Endothelial cell of umbilical vein (primary cell): ENCODE measurements at regions of chr21 and their contacts with region 1.

Region 1: DNA sequence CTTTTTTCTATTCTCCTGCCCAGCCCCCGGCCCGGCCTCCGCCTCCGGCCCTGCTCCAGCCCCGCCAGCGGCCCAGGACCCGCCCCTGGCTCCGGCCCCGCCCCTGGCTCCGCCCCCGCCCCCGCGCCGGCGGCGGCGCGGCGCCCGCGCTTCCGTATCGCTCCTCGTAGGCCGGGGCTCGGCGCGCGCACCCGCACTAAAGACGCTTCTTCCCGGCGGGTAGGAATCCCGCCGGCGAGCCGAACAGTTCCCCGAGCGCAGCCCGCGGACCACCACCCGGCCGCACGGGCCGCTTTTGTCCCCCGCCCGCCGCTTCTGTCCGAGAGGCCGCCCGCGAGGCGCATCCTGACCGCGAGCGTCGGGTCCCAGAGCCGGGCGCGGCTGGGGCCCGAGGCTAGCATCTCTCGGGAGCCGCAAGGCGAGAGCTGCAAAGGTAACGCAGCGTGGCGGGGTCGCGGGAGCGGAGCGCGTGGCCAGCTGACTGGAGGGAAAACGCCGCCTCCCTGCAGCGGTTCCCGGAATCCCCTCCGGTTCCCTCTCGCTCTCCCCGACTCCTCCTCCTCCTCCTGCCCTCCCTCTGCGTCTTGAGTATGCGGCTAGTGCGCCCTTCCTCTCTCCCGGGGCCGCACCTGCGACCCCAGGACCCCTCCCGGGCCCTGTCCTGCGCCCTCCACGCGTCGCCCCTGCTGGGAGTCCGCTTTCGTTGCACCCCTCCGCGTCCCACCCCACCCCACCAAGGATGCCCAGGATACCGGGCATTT is at the start of gene IFNAR2:
- DNase-seq: peak; percentile 62
- H3K4me3 ChIP-seq: peak within 1 kb of the TSS; percentile 90 to 98 (median 96)
- H3K27ac ChIP-seq: peak within 1 kb of the TSS; percentile 88
- H3K4me1 ChIP-seq: peaks cover 40% of the 10 kb centered on the region
- H3K27me3 ChIP-seq: peaks cover 6 to 10% of the 10 kb centered on the region in 2 experiments
- CTCF ChIP-seq: no peak
- POLR2A ChIP-seq: peak; percentile 15
- total RNA-seq, gene IFNAR2: 37.0 and 42.1 TPM in 2 replicates

Region 2: GRCh38 chr21:33189237-33189636 is 40.7 kb before region 1 on chr21:
- CTCF ChIA-PET with region 1: no interaction called
- POLR2A ChIA-PET with region 1: no interaction called
- dilution Hi-C with region 1: no loop called
- intact Hi-C with region 1: no loop called
- DNase-seq: no peak
- H3K4me3 ChIP-seq: no peak overlapping the region
- H3K27ac ChIP-seq: no peak overlapping the region
- H3K4me1 ChIP-seq: no peaks in the 10 kb centered on the region
- H3K27me3 ChIP-seq: peaks cover 7 to 30% of the 10 kb centered on the region in 2 experiments
- CTCF ChIP-seq: no peak
- POLR2A ChIP-seq: no peak

Region 3: DNA sequence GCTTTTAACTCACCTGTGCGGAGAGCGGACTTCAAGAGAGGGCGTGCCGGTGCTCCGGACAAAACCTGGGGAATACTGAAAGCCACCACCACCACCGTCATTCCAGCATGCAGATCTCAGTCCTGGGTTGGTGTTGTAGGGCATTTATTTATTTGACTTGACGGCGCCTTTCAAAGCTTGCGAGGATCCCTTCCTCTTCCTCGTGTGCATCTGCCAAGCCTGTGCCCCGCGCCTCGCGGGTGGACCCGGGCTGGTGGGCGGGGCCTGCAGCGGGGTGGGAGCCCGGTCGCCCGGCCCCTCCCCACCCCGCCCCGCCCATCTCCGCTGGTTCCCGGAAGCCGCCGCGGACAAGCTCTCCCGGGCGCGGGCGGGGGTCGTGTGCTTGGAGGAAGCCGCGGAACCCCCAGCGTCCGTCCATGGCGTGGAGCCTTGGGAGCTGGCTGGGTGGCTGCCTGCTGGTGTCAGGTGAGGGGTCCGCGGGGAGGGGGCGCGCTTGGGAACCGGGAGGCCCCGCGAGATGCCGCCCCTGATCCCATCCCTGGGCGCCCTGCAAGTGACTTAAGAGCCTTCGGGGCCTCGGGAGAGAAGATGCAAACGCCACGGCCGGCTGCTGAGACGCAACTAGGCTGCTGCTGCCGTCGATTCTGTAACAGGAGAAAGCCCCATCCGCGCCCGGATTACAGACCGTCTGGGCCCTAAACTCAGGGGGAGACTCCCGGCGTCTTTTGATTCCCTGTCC is 36.3 kb after region 1 on chr21 and contains the start of gene IL10RB:
- CTCF ChIA-PET with region 1: interaction called, 3 read pairs
- POLR2A ChIA-PET with region 1: no interaction called
- dilution Hi-C with region 1: no loop called
- intact Hi-C with region 1: loop called (anchors 2 kb)
- DNase-seq: peak; percentile 72
- H3K4me3 ChIP-seq: peak within 1 kb of the TSS; percentile 77 to 88 (median 84)
- H3K27ac ChIP-seq: peak within 1 kb of the TSS; percentile 54
- H3K4me1 ChIP-seq: peaks cover 10% of the 10 kb centered on the region
- H3K27me3 ChIP-seq: no peaks in the 10 kb centered on the region
- CTCF ChIP-seq: no peak
- POLR2A ChIP-seq: no peak
- total RNA-seq, gene IL10RB: 21.7 and 21.9 TPM in 2 replicates

Region 4: GRCh38 chr21:33286600-33287456 is 56.9 kb after region 1 on chr21:
- CTCF ChIA-PET with region 1: no interaction called
- POLR2A ChIA-PET with region 1: no interaction called
- dilution Hi-C with region 1: no loop called
- intact Hi-C with region 1: loop called (anchors 1 kb)
- DNase-seq: peak; percentile 75
- H3K4me3 ChIP-seq: no peak overlapping the region
- H3K27ac ChIP-seq: peak overlapping the region; percentile 38
- H3K4me1 ChIP-seq: peaks cover 28% of the 10 kb centered on the region
- H3K27me3 ChIP-seq: no peaks in the 10 kb centered on the region
- CTCF ChIP-seq: no peak
- POLR2A ChIP-seq: no peak

Region 5: GRCh38 chr21:33324291-33325221 is 94.6 kb after region 1 on chr21 and contains the start of gene IFNAR1:
- CTCF ChIA-PET with region 1: interaction called, 6 read pairs
- POLR2A ChIA-PET with region 1: no interaction called
- dilution Hi-C with region 1: no loop called
- intact Hi-C with region 1: loop called (anchors 2 kb)
- DNase-seq: peak; percentile 98
- H3K4me3 ChIP-seq: peak within 1 kb of the TSS; percentile 50 to 73 (median 65)
- H3K27ac ChIP-seq: peak within 1 kb of the TSS; percentile 46
- H3K4me1 ChIP-seq: peaks cover 11% of the 10 kb centered on the region
- H3K27me3 ChIP-seq: no peaks in the 10 kb centered on the region
- CTCF ChIP-seq: no peak
- POLR2A ChIP-seq: peak; percentile 93
- total RNA-seq, gene IFNAR1: 44.6 and 47.8 TPM in 2 replicates